K562 (cell line): ENCODE measurements at regions of chr7 and their contacts with region 1.

Region 1: DNA sequence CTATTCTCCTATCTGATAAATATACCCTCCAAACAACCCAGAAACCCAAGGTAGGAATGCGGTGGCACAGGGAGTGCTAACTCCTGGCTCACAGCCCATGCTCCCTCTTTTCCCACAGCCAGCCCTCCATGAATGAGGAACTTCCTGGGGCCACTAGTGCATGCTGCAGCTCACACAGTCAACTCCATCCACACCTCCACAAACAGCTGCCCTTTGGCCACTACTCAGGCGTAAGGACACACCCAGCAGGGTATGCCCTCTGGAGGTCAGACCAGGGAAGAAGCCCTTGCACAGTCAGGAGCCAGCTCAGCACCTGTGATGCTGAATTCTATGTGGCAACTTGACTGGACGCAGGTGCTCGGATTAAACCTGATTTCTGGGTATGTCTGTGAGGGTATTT is 85.2 kb upstream of the PIK3CG start:
- DNase-seq: peak; percentile 33 to 71 (median 56)
- ATAC-seq: peak; percentile 74
- H3K4me3 ChIP-seq: no peak overlapping the region
- H3K27ac ChIP-seq: no peak overlapping the region
- H3K4me1 ChIP-seq: peaks cover 12 to 56% of the 10 kb centered on the region in 2 experiments; a peak in 4 of 5 replicates
- H3K27me3 ChIP-seq: no peaks in the 10 kb centered on the region
- CTCF ChIP-seq: peak; percentile 66 to 84 (median 69)
- EP300 ChIP-seq: 0 out of 2 replicates have a peak, but pooled peaks have one; percentile 10
- POLR2A ChIP-seq: 0 out of 2 replicates have a peak, but pooled peaks have one; percentile 39
- RAD21 ChIP-seq: peak; percentile 38 to 68; a peak in 3 of 4 replicates

Region 2: DNA sequence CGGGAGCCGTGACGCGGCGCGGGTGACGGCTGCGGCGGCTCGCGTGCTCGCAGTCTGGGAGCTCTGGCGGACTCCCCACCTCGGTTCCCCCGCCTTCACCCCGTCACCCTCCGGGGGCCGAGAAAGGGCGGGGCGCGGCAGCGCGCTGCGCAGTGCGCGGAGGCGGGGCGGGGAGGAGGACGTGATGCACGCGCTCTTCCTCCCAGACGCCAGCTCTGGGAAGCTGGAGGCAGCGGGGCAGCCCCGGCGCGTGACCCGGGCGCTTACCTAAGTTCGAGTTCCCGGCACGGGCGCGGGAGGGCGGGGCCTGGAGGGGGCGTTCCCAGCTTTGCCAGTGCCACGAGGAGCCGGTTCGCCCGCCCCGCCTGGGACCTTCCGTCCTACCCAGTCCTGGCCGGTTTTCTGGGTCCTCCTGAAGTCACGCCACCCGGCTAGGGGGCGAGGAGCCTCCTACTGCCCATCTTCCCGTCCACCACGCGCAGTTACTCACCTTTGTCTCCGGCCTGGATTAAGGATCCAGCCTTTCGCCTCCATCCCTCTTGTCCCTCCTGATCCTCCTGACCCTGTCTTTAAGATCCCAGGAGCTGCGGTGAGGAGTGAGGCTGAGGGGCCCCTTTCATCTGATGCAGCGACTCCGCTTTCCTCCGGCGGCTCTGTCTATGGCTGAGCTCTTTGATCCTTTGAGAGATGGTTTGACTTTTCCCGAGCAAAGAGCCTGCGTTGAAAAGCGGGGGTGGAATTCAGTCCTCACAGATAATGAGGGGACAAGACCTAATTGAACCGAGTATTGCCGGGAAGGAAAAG is 494.6 kb before region 1 on chr7:
- CTCF ChIA-PET with region 1: no interaction called
- POLR2A ChIA-PET with region 1: interaction called, 8 read pairs
- in situ Hi-C with region 1: no loop called
- intact Hi-C with region 1: loop called (anchors 10 kb)
- DNase-seq: peak; percentile 98 to 100 (median 98)
- ATAC-seq: peak; percentile 87
- H3K4me3 ChIP-seq: peak overlapping the region; percentile 73
- H3K27ac ChIP-seq: peak overlapping the region; percentile 91
- H3K4me1 ChIP-seq: peaks cover 11 to 28% of the 10 kb centered on the region in 2 experiments
- H3K27me3 ChIP-seq: no peaks in the 10 kb centered on the region
- CTCF ChIP-seq: 0 out of 6 replicates have a peak, but pooled peaks of 1 of the 3 experiments have one; percentile 3
- EP300 ChIP-seq: peak; percentile 20; the same call in 1 of the 2 replicates
- POLR2A ChIP-seq: peak; percentile 94
- RAD21 ChIP-seq: peak in 1 of 2 experiments; percentile 18; a peak in 1 of 4 replicates

Region 3: DNA sequence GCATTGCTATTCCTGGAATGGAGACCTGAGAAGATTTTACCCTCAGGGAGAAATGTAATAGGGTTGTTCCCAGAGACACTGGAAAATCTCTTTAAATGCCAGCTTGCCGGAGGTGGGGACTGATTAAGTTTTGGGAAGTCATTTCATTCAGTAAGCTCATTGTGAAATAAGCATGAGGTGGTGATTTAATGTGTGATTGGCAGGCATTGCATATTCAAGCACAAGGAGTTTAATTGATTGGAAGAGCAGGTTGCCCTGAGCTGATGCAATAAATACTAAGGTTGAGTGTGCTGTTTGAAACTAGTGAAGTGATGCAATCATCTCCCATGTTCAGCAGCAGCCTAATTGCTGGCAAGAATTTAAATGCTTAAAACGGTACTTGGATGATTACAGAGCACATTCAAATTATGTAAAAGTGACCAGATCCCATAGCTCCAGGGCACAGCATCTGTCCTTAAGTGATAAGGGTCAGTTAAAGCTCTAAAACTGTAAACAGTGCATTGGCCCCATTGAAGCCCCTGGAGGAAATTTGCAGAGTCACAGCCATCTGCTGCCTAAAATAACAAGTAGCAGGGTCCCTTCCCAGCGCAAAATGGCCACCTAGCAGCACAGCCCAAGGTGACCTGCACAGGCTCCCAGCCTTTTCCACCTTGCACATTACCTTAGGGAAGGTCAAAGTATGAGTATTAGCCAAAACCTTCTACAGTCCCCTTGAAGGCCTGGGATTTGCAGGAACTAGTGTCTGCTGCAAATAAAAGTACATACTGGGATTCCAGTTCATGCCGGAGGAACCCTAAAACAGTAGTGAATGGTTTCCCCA is 211.0 kb before region 1 on chr7:
- CTCF ChIA-PET with region 1: no interaction called
- POLR2A ChIA-PET with region 1: interaction called, 10 read pairs
- in situ Hi-C with region 1: no loop called
- intact Hi-C with region 1: no loop called
- DNase-seq: peak; percentile 94 to 100 (median 95)
- ATAC-seq: peak; percentile 88
- H3K4me3 ChIP-seq: no peak overlapping the region
- H3K27ac ChIP-seq: peak overlapping the region; percentile 99
- H3K4me1 ChIP-seq: peaks cover 39 to 75% of the 10 kb centered on the region in 2 experiments
- H3K27me3 ChIP-seq: no peaks in the 10 kb centered on the region
- CTCF ChIP-seq: peak; percentile 40 to 51 (median 48); a peak in 5 of 6 replicates
- EP300 ChIP-seq: peak; percentile 100
- POLR2A ChIP-seq: peak; percentile 53; the same call in 1 of the 2 replicates
- RAD21 ChIP-seq: peak; percentile 69 to 72

Region 4: DNA sequence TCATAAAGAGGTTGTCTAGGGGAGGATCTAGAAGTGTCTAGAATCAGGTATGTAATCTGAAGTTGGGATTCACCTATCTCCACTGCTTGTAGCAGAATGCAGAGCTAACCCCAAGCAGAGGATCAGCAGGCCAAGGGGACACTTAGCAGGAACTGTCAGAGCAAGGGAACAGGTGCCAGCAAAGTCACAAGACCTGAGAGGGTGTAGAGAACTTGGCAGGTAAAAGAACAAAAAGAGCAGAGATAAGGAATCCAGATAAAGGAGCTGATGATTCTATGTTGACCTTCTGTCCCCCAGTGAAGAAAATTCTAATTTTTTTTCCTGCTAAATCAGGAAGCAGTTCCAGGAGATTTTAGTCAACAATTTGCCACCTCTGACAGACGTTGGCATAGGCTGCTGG is 27.5 kb before region 1 on chr7:
- CTCF ChIA-PET with region 1: no interaction called
- POLR2A ChIA-PET with region 1: interaction called, 23 read pairs
- in situ Hi-C with region 1: no loop called
- intact Hi-C with region 1: no loop called
- DNase-seq: no peak
- ATAC-seq: no peak
- H3K4me3 ChIP-seq: no peak overlapping the region
- H3K27ac ChIP-seq: no peak overlapping the region
- H3K4me1 ChIP-seq: peaks cover 0 to 9% of the 10 kb centered on the region in 2 experiments; a peak in 4 of 5 replicates
- H3K27me3 ChIP-seq: no peaks in the 10 kb centered on the region; a peak in 1 of 5 replicates
- CTCF ChIP-seq: no peak
- EP300 ChIP-seq: no peak
- POLR2A ChIP-seq: no peak
- RAD21 ChIP-seq: no peak

Region 5: GRCh38 chr7:106767498-106768323 is 12.2 kb before region 1 on chr7:
- CTCF ChIA-PET with region 1: no interaction called
- POLR2A ChIA-PET with region 1: interaction called, 37 read pairs
- in situ Hi-C with region 1: no loop called
- intact Hi-C with region 1: no loop called
- DNase-seq: no peak
- ATAC-seq: peak; percentile 34; the same call in 2 of the 3 replicates
- H3K4me3 ChIP-seq: no peak overlapping the region
- H3K27ac ChIP-seq: no peak overlapping the region; the same call in 2 of the 3 replicates
- H3K4me1 ChIP-seq: peaks cover 0 to 20% of the 10 kb centered on the region in 2 experiments; a peak in 4 of 5 replicates
- H3K27me3 ChIP-seq: no peaks in the 10 kb centered on the region
- CTCF ChIP-seq: no peak
- EP300 ChIP-seq: no peak
- POLR2A ChIP-seq: no peak
- RAD21 ChIP-seq: no peak

Region 6: DNA sequence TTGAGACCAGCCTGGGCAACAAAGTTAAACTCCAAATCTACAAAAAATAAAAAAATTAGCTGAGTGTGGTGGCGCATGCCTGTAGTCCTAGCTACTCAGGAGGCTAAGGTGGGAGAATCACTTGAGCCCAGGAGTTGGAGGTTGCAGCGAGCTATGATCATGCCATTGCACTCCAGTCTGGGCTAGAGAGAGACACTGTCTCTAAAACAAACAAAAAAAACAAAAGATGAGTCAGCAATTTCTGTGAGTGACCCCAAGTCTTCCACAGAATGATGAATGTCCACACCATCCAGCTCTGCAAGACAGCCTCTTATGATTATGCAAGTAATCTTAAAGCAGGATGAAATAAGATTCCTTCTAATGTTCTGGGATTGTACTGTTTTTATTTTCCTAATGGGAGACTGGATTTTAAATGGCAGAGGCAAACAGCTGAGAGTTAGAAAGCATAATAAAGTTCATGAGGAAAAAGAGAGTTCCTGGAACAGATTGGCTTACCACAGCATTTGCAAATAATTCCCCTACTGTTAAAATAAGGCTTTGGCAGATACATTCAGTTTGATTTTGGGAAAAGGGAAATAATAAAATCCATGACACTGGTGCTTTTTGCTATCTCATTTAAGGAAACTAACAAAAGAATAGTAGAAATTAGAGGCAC is 245.7 kb after region 1 on chr7:
- CTCF ChIA-PET with region 1: no interaction called
- POLR2A ChIA-PET with region 1: no interaction called
- in situ Hi-C with region 1: no loop called
- intact Hi-C with region 1: no loop called
- DNase-seq: peak; percentile 63 to 89 (median 66)
- ATAC-seq: peak; percentile 79
- H3K4me3 ChIP-seq: no peak overlapping the region
- H3K27ac ChIP-seq: peak overlapping the region; percentile 54
- H3K4me1 ChIP-seq: peaks cover 40 to 55% of the 10 kb centered on the region in 2 experiments
- H3K27me3 ChIP-seq: no peaks in the 10 kb centered on the region
- CTCF ChIP-seq: no peak
- EP300 ChIP-seq: peak; percentile 86
- POLR2A ChIP-seq: no peak
- RAD21 ChIP-seq: peak in 1 of 2 experiments; percentile 25; a peak in 2 of 4 replicates

Region 7: GRCh38 chr7:107168233-107169119 is 388.6 kb after region 1 on chr7 and contains the start of gene HBP1:
- CTCF ChIA-PET with region 1: no interaction called
- POLR2A ChIA-PET with region 1: interaction called, 22 read pairs
- in situ Hi-C with region 1: no loop called
- intact Hi-C with region 1: no loop called
- DNase-seq: peak; percentile 96 to 100 (median 98)
- ATAC-seq: peak; percentile 89
- H3K4me3 ChIP-seq: peak within 1 kb of the TSS; percentile 74
- H3K27ac ChIP-seq: peak within 1 kb of the TSS; percentile 93
- H3K4me1 ChIP-seq: peaks cover 5 to 21% of the 10 kb centered on the region in 2 experiments
- H3K27me3 ChIP-seq: no peaks in the 10 kb centered on the region
- CTCF ChIP-seq: 0 out of 6 replicates have a peak, but pooled peaks of 1 of the 3 experiments have one; percentile 10
- EP300 ChIP-seq: no peak; the same call in 1 of the 2 replicates
- POLR2A ChIP-seq: peak; percentile 72
- RAD21 ChIP-seq: no peak
- polyA plus RNA-seq, gene HBP1: 37.9 to 44.9 TPM